CD4-positive, alpha-beta T cell (primary cell): ENCODE measurements at regions of chr20 and their contacts with region 1.

Region 1: DNA sequence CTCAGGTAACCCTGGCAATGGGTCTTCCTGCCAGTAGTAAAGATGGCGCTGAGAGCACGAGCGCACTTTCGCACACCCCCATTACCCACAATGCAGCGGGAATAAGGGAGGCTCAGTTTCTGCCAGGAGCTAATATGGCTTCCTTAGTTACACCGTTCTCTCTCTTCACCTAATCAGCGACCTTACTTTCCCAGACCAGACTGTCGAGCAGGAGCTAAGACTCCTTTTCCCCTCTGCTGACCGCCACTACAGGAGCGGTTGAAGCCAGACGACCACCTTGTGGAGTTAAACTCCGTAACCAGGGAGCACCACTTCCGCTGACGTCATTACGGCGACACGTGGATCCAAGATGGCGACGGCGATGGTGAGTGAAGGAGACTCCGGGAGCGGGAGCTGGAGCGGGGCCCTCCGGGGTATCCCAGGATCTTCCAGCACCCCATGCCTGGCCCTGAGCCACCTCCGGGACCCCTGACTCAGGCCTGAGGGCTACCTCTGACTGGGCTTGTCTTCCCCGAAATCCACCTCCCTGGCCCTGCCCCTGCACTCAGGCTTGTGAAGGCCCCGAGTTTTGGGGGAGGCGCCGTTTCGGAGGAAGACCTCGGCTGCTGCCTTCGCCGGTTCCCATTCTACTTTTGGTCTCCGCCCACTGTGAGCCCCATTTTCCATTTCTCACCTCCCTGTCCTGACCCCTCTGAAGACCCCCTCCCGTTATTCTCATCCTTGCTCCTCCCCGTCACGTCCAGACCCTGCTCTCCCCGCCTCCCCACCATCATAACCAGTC is at the start of gene TM9SF4:
- DNase-seq: peak; percentile 77 to 96 (median 88)
- ATAC-seq: peak; percentile 89
- H3K4me3 ChIP-seq: peak within 1 kb of the TSS; percentile 97
- H3K4me3 Mint-ChIP-seq: peak within 1 kb of the TSS; percentile 92
- H3K27ac ChIP-seq: peak within 1 kb of the TSS; percentile 100
- H3K27ac Mint-ChIP-seq: peak within 1 kb of the TSS; percentile 93
- H3K4me1 ChIP-seq: peaks cover 27% of the 10 kb centered on the region
- H3K4me1 Mint-ChIP-seq: peaks cover 40% of the 10 kb centered on the region
- H3K27me3 ChIP-seq: no peaks in the 10 kb centered on the region
- H3K27me3 Mint-ChIP-seq: no peaks in the 10 kb centered on the region
- CTCF ChIP-seq: no peak
- total RNA-seq, gene TM9SF4: 22.4 to 24.5 TPM

Region 2: GRCh38 chr20:31738729-31739561 is 370.6 kb before region 1 on chr20 and contains the start of gene TPX2:
- CTCF ChIA-PET with region 1: no interaction called
- POLR2A ChIA-PET with region 1: no interaction called
- intact Hi-C with region 1: loop called in 1 of 2 experiments (anchors 5 kb)
- DNase-seq: peak; percentile 56 to 91 (median 78)
- ATAC-seq: peak; percentile 93
- H3K4me3 ChIP-seq: peak within 1 kb of the TSS; percentile 73
- H3K4me3 Mint-ChIP-seq: no peak within 1 kb of the TSS
- H3K27ac ChIP-seq: no peak within 1 kb of the TSS
- H3K27ac Mint-ChIP-seq: no peak within 1 kb of the TSS
- H3K4me1 ChIP-seq: peaks cover 18% of the 10 kb centered on the region
- H3K4me1 Mint-ChIP-seq: no peaks in the 10 kb centered on the region
- H3K27me3 ChIP-seq: no peaks in the 10 kb centered on the region
- H3K27me3 Mint-ChIP-seq: no peaks in the 10 kb centered on the region
- CTCF ChIP-seq: no peak
- total RNA-seq, gene TPX2: 0.85 to 0.89 TPM

Region 3: GRCh38 chr20:31879143-31879987 is 230.2 kb before region 1 on chr20:
- CTCF ChIA-PET with region 1: no interaction called
- POLR2A ChIA-PET with region 1: no interaction called
- intact Hi-C with region 1: loop called in 1 of 2 experiments (anchors 5 kb)
- DNase-seq: peak; percentile 53 to 93 (median 66)
- ATAC-seq: peak; percentile 88
- H3K4me3 ChIP-seq: peak overlapping the region; percentile 69
- H3K4me3 Mint-ChIP-seq: peak overlapping the region; percentile 92
- H3K27ac ChIP-seq: no peak overlapping the region
- H3K27ac Mint-ChIP-seq: peak overlapping the region; percentile 48
- H3K4me1 ChIP-seq: peaks cover 15% of the 10 kb centered on the region
- H3K4me1 Mint-ChIP-seq: peaks cover 12% of the 10 kb centered on the region
- H3K27me3 ChIP-seq: peaks cover 0 to 1% of the 10 kb centered on the region in 2 experiments
- H3K27me3 Mint-ChIP-seq: peaks cover 18% of the 10 kb centered on the region
- CTCF ChIP-seq: no peak

Region 4: DNA sequence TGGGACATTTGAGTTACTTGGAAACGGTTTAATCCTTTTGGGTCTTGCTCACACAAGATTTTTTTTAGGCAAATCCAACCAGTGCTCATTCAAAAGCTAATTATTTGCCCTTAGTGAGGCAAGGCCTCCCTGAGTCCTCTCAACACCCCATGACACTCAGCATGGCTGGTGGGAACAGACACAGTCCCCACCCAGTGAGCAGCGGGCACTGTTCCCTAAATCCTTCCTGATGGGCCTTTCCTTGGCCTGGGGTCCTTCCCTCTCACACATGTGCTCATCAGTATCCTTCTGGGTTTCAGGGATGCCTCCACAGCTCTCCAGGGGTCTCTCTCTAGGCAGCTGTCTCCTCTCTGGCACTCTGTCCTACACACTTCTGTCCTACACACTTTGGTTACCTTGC is 69.9 kb after region 1 on chr20:
- CTCF ChIA-PET with region 1: no interaction called
- POLR2A ChIA-PET with region 1: no interaction called
- intact Hi-C with region 1: no loop called
- DNase-seq: no peak
- ATAC-seq: no peak
- H3K4me3 ChIP-seq: no peak overlapping the region
- H3K4me3 Mint-ChIP-seq: no peak overlapping the region
- H3K27ac ChIP-seq: no peak overlapping the region
- H3K27ac Mint-ChIP-seq: no peak overlapping the region
- H3K4me1 ChIP-seq: no peaks in the 10 kb centered on the region
- H3K4me1 Mint-ChIP-seq: no peaks in the 10 kb centered on the region
- H3K27me3 ChIP-seq: no peaks in the 10 kb centered on the region
- H3K27me3 Mint-ChIP-seq: no peaks in the 10 kb centered on the region
- CTCF ChIP-seq: no peak

Region 5: DNA sequence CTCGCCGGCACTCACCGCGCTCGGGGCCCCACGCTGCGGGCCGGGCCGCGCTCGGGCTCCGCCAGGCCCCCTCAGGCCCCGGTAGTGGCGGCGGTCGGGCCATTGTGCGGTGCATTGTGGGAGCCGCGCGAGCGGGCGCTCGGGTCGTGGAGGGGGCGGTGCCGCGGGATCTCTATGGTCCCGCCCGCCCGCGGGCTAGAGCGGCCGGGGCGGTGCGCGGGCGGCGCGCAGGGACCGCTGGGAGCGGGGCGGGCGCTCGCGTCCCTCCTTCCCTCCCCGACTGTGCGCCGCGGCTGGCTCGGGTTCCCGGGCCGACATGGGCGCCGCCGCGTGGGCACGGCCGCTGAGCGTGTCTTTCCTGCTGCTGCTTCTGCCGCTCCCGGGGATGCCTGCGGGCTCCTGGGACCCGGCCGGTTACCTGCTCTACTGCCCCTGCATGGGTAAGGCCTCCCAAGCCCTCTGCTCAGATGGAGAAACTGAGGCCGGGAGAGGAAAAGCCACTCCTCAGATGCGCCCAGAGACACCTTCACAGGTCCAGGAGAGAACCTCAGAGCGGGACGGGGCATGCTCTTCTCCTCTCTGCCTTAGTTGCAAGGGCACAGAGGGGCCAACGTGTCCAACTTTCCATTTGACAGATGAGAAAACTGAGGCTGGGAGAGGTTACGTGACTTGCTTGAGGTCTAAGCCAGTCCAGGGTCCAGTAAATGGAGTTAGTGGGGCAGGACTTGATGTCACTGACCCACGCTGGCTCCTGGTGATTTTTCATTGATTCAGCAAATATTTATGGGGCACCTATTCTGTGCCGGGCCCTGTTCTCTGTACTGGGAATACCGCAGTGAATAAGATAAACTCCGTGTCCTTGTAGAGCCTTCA is 98.3 kb after region 1 on chr20 and contains the starts of genes PLAGL2 and POFUT1:
- CTCF ChIA-PET with region 1: no interaction called
- POLR2A ChIA-PET with region 1: no interaction called
- intact Hi-C with region 1: loop called in 1 of 2 experiments (anchors 1 kb)
- DNase-seq: peak; percentile 74 to 95 (median 87)
- ATAC-seq: peak; percentile 95
- H3K4me3 ChIP-seq: peak within 1 kb of the TSS; percentile 94
- H3K4me3 Mint-ChIP-seq: peak within 1 kb of the TSS; percentile 96
- H3K27ac ChIP-seq: peak within 1 kb of the TSS; percentile 50 to 60
- H3K27ac Mint-ChIP-seq: peak within 1 kb of the TSS; percentile 92
- H3K4me1 ChIP-seq: peaks cover 66% of the 10 kb centered on the region
- H3K4me1 Mint-ChIP-seq: peaks cover 79% of the 10 kb centered on the region
- H3K27me3 ChIP-seq: no peaks in the 10 kb centered on the region
- H3K27me3 Mint-ChIP-seq: no peaks in the 10 kb centered on the region
- CTCF ChIP-seq: no peak
- total RNA-seq, gene PLAGL2: 15.6 to 16.9 TPM
- total RNA-seq, gene POFUT1: 7.5 to 8.8 TPM

Region 6: GRCh38 chr20:32277361-32278198 is 168.0 kb after region 1 on chr20 and contains the start of gene KIF3B:
- CTCF ChIA-PET with region 1: no interaction called
- POLR2A ChIA-PET with region 1: no interaction called
- intact Hi-C with region 1: loop called in 1 of 2 experiments (anchors 5 kb)
- DNase-seq: peak; percentile 67 to 94 (median 80)
- ATAC-seq: peak; percentile 88
- H3K4me3 ChIP-seq: peak within 1 kb of the TSS; percentile 95
- H3K4me3 Mint-ChIP-seq: peak within 1 kb of the TSS; percentile 92
- H3K27ac ChIP-seq: peak within 1 kb of the TSS; percentile 76 to 88
- H3K27ac Mint-ChIP-seq: peak within 1 kb of the TSS; percentile 85
- H3K4me1 ChIP-seq: peaks cover 27% of the 10 kb centered on the region
- H3K4me1 Mint-ChIP-seq: peaks cover 46% of the 10 kb centered on the region
- H3K27me3 ChIP-seq: no peaks in the 10 kb centered on the region
- H3K27me3 Mint-ChIP-seq: no peaks in the 10 kb centered on the region
- CTCF ChIP-seq: no peak
- total RNA-seq, gene KIF3B: 7.3 TPM